Tibial artery (tissue), 4 donors: ENCODE measurements at regions of chr2 and their contacts with region 1.

Region 1: DNA sequence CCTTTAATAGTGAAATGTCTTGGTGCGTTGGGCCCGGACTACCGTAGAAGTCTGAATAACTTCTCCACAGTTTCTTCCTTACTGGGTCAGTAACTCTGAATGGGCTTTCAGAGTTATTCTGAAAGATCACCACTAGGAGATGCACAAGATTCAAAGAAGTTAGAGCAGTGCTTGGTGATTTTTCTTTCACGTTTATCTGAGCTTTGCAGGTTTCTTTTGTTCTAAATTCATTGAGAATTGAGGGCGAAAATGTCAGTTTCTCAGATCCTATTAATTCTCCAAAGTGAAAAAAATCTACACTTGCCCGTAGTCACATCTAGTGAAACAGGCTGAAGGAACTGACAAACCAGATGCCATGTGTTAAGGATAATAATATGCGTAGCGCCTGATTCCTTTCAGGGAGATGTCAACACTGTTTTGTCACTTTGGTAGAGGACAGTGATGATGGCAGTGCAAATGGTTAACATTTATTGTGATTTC is 70.1 kb downstream of the QPCT start:
- DNase-seq: no peak
- H3K4me3 ChIP-seq: no peak overlapping the region
- H3K27ac ChIP-seq: peak overlapping the region in 1 of 2 donors; percentile 32
- H3K4me1 ChIP-seq: peaks cover 0 to 20% (median 11%) of the 10 kb centered on the region in 4 donors
- H3K27me3 ChIP-seq: no peaks in the 10 kb centered on the region
- CTCF ChIP-seq: peak; percentile 83 to 99

Region 2: GRCh38 chr2:37083873-37084794 is 330.4 kb before region 1 on chr2 and contains the starts of genes GPATCH11 and HEATR5B:
- intact Hi-C with region 1: no loop called
- DNase-seq: peak; percentile 95 to 97
- H3K4me3 ChIP-seq: peak within 1 kb of the TSS; percentile 76 to 86
- H3K27ac ChIP-seq: peak within 1 kb of the TSS; percentile 78 to 85
- H3K4me1 ChIP-seq: peaks cover 0 to 37% (median 22%) of the 10 kb centered on the region in 4 donors
- H3K27me3 ChIP-seq: no peaks in the 10 kb centered on the region
- CTCF ChIP-seq: no peak

Region 3: DNA sequence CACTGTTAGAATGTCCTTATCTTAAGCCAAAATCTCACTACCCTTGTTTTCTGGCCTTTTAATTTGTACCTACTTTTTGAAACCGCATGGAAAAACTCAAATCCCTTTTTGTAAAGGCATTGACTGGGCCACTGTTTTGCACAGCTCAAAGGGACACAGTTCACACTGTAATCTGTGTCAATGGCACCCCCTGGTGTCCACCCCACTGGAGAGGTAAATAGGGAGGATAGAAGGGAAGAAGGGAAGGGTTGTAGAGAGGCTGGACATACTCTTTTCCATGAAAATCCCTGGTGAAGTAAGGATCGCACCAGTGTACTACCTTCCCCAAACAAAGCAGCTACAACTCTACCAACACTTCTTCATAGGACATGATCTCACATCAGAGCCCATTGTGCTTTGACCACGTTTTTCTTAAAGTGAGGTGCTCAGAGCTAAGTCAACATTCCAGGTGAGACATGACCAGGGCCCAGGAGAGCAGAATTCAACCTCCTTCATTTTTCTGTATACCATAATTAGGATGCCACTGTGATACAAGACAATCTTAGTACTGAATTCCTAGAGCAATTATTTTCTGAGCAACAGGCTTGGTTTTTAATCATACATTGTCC is 418.2 kb after region 1 on chr2:
- intact Hi-C with region 1: loop called (anchors 2 kb)
- DNase-seq: peak; percentile 92 to 96
- H3K4me3 ChIP-seq: no peak overlapping the region
- H3K27ac ChIP-seq: peak overlapping the region in 1 of 2 donors; percentile 50
- H3K4me1 ChIP-seq: peaks cover 0 to 39% (median 21%) of the 10 kb centered on the region in 4 donors
- H3K27me3 ChIP-seq: no peaks in the 10 kb centered on the region
- CTCF ChIP-seq: peak; percentile 76 to 95

Region 4: GRCh38 chr2:37871456-37872191 is 457.1 kb after region 1 on chr2:
- intact Hi-C with region 1: loop called (anchors 5 kb)
- DNase-seq: no peak
- H3K4me3 ChIP-seq: no peak overlapping the region
- H3K27ac ChIP-seq: no peak overlapping the region
- H3K4me1 ChIP-seq: peaks cover 0 to 36% (median 23%) of the 10 kb centered on the region in 4 donors
- H3K27me3 ChIP-seq: no peaks in the 10 kb centered on the region
- CTCF ChIP-seq: no peak